Activated CD8-positive, alpha-beta T cell treated with anti-CD3 and anti-CD28 coated beads for 36 hours (primary cell): ENCODE measurements at regions of chr10 and their contacts with region 1.

Region 1: DNA sequence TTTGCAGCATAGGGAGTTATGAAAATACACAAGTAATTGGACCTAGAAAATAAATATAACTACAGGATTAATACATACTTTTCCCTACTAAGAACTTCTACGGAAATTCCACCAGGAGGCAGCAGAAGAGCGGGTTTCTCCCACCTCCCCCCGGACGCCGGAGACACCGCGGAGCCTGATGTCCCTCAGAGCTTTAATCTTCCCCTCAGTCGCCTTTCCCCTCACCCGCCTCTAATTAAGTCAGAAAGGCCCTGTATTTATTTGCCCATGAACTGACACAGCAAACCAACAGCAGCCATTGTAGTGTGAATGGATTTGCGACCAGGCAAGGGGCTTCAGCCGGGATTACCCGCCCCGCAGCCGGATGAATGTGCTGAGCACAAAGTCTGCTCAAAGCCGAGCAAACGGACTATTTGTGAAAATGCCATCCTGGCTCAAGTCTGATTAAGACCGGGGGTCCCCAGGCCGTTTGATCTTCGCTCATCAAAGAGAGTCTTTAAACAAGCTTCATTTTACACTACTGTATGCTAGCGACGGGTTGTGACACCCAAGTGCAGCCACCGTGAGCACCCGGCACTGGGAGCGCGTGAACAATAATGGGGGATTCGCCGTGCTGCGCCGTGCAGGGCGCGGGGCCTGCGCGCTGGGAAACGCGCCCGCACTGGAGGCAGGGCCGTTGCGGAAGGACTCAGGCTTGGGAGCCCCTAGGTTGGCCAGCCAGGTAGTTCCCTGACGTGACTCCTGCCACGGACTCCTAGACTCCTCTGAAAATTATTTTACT is 5.6 kb upstream of the DKK1 start:
- DNase-seq: peak; percentile 51
- ATAC-seq: peak; percentile 62
- H3K4me3 Mint-ChIP-seq: no peak overlapping the region
- H3K27ac Mint-ChIP-seq: no peak overlapping the region
- H3K4me1 Mint-ChIP-seq: peaks cover 5% of the 10 kb centered on the region
- H3K27me3 Mint-ChIP-seq: peaks cover 34% of the 10 kb centered on the region
- CTCF ChIP-seq: peak; percentile 57

Region 2: DNA sequence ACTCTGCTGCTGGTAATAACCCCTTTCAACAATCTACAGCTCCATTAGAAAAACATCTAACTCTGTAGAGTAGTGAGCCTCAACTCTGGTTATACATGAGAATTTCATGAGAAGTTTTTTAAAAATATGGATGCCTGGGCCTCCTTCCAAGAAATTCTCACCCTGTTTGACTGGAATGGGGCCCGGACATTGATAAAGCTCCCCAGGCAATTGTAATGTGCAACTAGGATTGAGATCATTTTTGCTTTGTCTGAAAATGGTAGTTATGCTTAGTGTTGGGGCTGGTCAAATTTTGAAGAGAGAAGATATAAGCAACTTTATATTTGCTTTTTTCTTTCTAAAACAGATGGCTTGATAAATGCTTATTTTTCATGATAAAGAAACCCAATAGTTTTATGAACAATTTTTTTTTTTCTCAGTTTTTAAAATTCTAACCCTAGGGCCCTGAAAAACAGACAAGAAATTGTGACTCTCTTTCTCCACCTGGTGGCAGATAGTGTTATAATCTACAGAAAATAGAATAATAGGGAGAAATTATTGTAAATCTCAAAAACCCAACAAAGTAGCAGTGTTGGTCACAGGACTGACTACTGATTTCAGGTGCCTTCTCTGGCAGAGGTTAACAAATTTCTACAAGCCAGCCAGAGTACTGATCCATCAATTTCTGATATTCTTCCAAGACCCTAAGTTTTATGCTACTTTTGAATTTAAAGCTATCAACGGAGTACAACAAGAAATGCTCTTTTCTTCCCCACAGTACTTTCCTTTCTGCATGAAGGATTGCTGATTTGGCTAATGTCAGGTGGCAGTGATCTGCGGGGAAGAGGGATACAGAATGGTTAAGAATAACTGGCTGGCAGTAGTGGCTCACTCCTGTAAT is 180.4 kb after region 1 on chr10:
- CTCF ChIA-PET with region 1: interaction called, 27 read pairs
- POLR2A ChIA-PET with region 1: no interaction called
- intact Hi-C with region 1: loop called (anchors 2 kb)
- DNase-seq: no peak
- ATAC-seq: no peak
- H3K4me3 Mint-ChIP-seq: no peak overlapping the region
- H3K27ac Mint-ChIP-seq: no peak overlapping the region
- H3K4me1 Mint-ChIP-seq: no peaks in the 10 kb centered on the region
- H3K27me3 Mint-ChIP-seq: no peaks in the 10 kb centered on the region
- CTCF ChIP-seq: peak; percentile 46